CD8-positive, alpha-beta memory T cell (primary cell): ENCODE measurements at regions of chr12 and their contacts with region 1.

Region 1: GRCh38 chr12:104358347-104359003 is 54.9 kb downstream of the EID3 start:
- DNase-seq: peak; percentile 43 to 77 (median 56)
- H3K4me3 ChIP-seq: no peak overlapping the region
- H3K4me3 Mint-ChIP-seq: no peak overlapping the region
- H3K27ac ChIP-seq: no peak overlapping the region
- H3K27ac Mint-ChIP-seq: peak overlapping the region in 1 of 8 donors; percentile 13
- H3K4me1 ChIP-seq: no peaks in the 10 kb centered on the region
- H3K4me1 Mint-ChIP-seq: no peaks in the 10 kb centered on the region
- H3K27me3 ChIP-seq: no peaks in the 10 kb centered on the region
- H3K27me3 Mint-ChIP-seq: no peaks in the 10 kb centered on the region

Region 2: GRCh38 chr12:104201238-104202001 is 157.1 kb before region 1 on chr12:
- CTCF ChIA-PET with region 1: interaction called, 41 read pairs
- POLR2A ChIA-PET with region 1: no interaction called
- DNase-seq: peak; percentile 7 to 60 (median 48)
- H3K4me3 ChIP-seq: no peak overlapping the region
- H3K4me3 Mint-ChIP-seq: no peak overlapping the region
- H3K27ac ChIP-seq: no peak overlapping the region
- H3K27ac Mint-ChIP-seq: no peak overlapping the region
- H3K4me1 ChIP-seq: no peaks in the 10 kb centered on the region
- H3K4me1 Mint-ChIP-seq: peaks cover 0 to 3% (median 2%) of the 10 kb centered on the region in 3 donors
- H3K27me3 ChIP-seq: no peaks in the 10 kb centered on the region
- H3K27me3 Mint-ChIP-seq: peaks cover 14 to 26% of the 10 kb centered on the region in 2 donors

Region 3: GRCh38 chr12:104215638-104216297 is 142.7 kb before region 1 on chr12 and contains the start of gene TXNRD1:
- CTCF ChIA-PET with region 1: interaction called, 18 read pairs
- POLR2A ChIA-PET with region 1: no interaction called
- DNase-seq: peak; percentile 70 to 87 (median 76)
- H3K4me3 ChIP-seq: peak within 1 kb of the TSS; percentile 65
- H3K4me3 Mint-ChIP-seq: peak within 1 kb of the TSS; percentile 81 to 92 (median 85)
- H3K27ac ChIP-seq: no peak within 1 kb of the TSS
- H3K27ac Mint-ChIP-seq: peak within 1 kb of the TSS; percentile 6 to 92 (median 83)
- H3K4me1 ChIP-seq: peaks cover 13% of the 10 kb centered on the region
- H3K4me1 Mint-ChIP-seq: peaks cover 20 to 29% (median 23%) of the 10 kb centered on the region in 3 donors
- H3K27me3 ChIP-seq: no peaks in the 10 kb centered on the region
- H3K27me3 Mint-ChIP-seq: peaks cover 0 to 5% of the 10 kb centered on the region in 2 donors
- total RNA-seq, gene TXNRD1: 103 to 107 TPM